ENCODE measurements at regions of chr3 and their contacts with region 1.

Region 1: GRCh38 chr3:132016061-132017041 is 18.5 kb downstream of the CPNE4 start:
- DNase-seq: no peak
- ATAC-seq: no peak
- H3K4me3 ChIP-seq: no peak overlapping the region
- H3K27ac ChIP-seq: no peak overlapping the region
- H3K4me1 ChIP-seq: no peaks in the 10 kb centered on the region
- H3K27me3 ChIP-seq: no peaks in the 10 kb centered on the region
- CTCF ChIP-seq: no peak
- POLR2A ChIP-seq: no peak

Region 2: GRCh38 chr3:131794766-131795388 is 221.5 kb before region 1 on chr3:
- intact Hi-C with region 1: loop called in 1 of 2 experiments (anchors 10 kb)
- DNase-seq: no peak
- ATAC-seq: peak; percentile 80 to 89 (median 84)
- H3K4me3 ChIP-seq: no peak overlapping the region
- H3K27ac ChIP-seq: no peak overlapping the region
- H3K4me1 ChIP-seq: no peaks in the 10 kb centered on the region
- H3K27me3 ChIP-seq: no peaks in the 10 kb centered on the region
- CTCF ChIP-seq: peak; percentile 54 to 77 (median 72)
- POLR2A ChIP-seq: no peak

Measured in right lobe of liver (tissue), 6 donors.